Activated B cell treated with CpG ODN at 0.5 μM for 24 hours (primary cell): ENCODE measurements at regions of chrX and their contacts with region 1.

Region 1: GRCh38 chrX:12974796-12975669 is at the start of gene TMSB4X:
- DNase-seq: peak; percentile 75
- ATAC-seq: peak; percentile 46
- H3K4me3 Mint-ChIP-seq: peak within 1 kb of the TSS; percentile 94
- H3K27ac Mint-ChIP-seq: peak within 1 kb of the TSS; percentile 97
- H3K4me1 Mint-ChIP-seq: peaks cover 58% of the 10 kb centered on the region
- H3K27me3 Mint-ChIP-seq: no peaks in the 10 kb centered on the region
- CTCF ChIP-seq: no peak
- total RNA-seq, gene TMSB4X: 5,922 and 6,273 TPM in 2 replicates

Region 2: DNA sequence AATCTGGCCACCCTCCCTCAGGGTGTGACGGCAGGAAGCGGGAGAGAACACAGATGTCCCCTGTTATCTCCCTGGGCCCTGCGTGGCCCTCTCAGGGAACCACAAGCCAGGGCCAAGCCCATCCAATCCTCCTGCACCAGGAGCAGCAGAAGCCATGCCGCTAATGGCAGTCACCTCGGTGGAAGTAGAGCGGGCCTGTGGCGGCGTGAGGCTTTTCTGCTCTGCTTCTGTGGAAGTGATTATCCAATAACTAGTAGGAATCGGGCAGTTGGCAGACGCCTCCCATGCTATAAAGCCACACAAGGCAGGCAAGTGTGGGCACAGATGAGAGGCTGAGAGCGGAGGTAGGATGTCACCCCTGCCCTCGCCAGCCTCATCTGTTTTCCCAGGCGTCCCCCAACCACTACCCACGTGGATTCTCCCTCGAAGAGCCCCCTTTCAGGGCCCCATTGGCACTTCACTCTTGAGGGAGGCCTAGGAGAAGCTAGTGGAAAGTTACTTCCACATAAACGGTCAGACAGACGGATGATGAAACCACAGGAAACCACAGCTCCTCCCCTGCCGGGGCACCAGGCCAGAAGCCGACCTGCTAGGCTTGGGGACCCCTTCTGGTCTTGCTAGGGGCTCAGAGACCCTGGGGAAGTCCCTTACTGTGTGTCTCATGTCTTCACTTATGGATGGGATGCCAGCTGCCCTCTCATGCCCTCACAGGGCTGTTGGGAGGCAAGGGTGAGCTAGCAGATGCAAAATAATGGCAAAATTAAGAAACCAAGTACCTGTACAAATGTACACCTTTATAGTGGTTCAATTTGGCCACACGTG is 18.9 kb before region 1 on chrX:
- CTCF ChIA-PET with region 1: interaction called, 26 read pairs
- POLR2A ChIA-PET with region 1: interaction called, 931 read pairs
- intact Hi-C with region 1: loop called (anchors 1 kb)
- DNase-seq: no peak
- ATAC-seq: peak; percentile 45
- H3K4me3 Mint-ChIP-seq: peak overlapping the region; percentile 79
- H3K27ac Mint-ChIP-seq: peak overlapping the region; percentile 96
- H3K4me1 Mint-ChIP-seq: peaks cover 79% of the 10 kb centered on the region
- H3K27me3 Mint-ChIP-seq: no peaks in the 10 kb centered on the region
- CTCF ChIP-seq: no peak

Region 3: GRCh38 chrX:13005661-13006473 is 30.8 kb after region 1 on chrX:
- CTCF ChIA-PET with region 1: interaction called, 3 read pairs
- POLR2A ChIA-PET with region 1: interaction called, 836 read pairs
- intact Hi-C with region 1: loop called (anchors 1 kb)
- DNase-seq: no peak
- ATAC-seq: peak; percentile 61
- H3K4me3 Mint-ChIP-seq: peak overlapping the region; percentile 84
- H3K27ac Mint-ChIP-seq: peak overlapping the region; percentile 97
- H3K4me1 Mint-ChIP-seq: peaks cover 80% of the 10 kb centered on the region
- H3K27me3 Mint-ChIP-seq: no peaks in the 10 kb centered on the region
- CTCF ChIP-seq: no peak

Region 4: GRCh38 chrX:13051529-13052172 is 76.6 kb after region 1 on chrX:
- CTCF ChIA-PET with region 1: no interaction called
- POLR2A ChIA-PET with region 1: interaction called, 18 read pairs
- intact Hi-C with region 1: loop called (anchors 1 kb)
- DNase-seq: no peak
- ATAC-seq: peak; percentile 71
- H3K4me3 Mint-ChIP-seq: peak overlapping the region; percentile 19
- H3K27ac Mint-ChIP-seq: peak overlapping the region; percentile 82
- H3K4me1 Mint-ChIP-seq: peaks cover 57% of the 10 kb centered on the region
- H3K27me3 Mint-ChIP-seq: no peaks in the 10 kb centered on the region
- CTCF ChIP-seq: no peak

Region 5: GRCh38 chrX:13254076-13254785 is 279.2 kb after region 1 on chrX:
- CTCF ChIA-PET with region 1: interaction called, 3 read pairs
- POLR2A ChIA-PET with region 1: interaction called, 6 read pairs
- intact Hi-C with region 1: loop called (anchors 1 kb)
- DNase-seq: no peak
- ATAC-seq: no peak
- H3K4me3 Mint-ChIP-seq: peak overlapping the region; percentile 28
- H3K27ac Mint-ChIP-seq: peak overlapping the region; percentile 74
- H3K4me1 Mint-ChIP-seq: peaks cover 72% of the 10 kb centered on the region
- H3K27me3 Mint-ChIP-seq: no peaks in the 10 kb centered on the region
- CTCF ChIP-seq: no peak